ENCODE measurements at regions of chr12 and their contacts with region 1.

Region 1: GRCh38 chr12:98572010-98572409 is 21.5 kb upstream of the SLC25A3 start:
- DNase-seq: no peak
- ATAC-seq: no peak
- H3K4me3 Mint-ChIP-seq: no peak overlapping the region
- H3K27ac Mint-ChIP-seq: no peak overlapping the region
- H3K4me1 Mint-ChIP-seq: no peaks in the 10 kb centered on the region
- H3K27me3 Mint-ChIP-seq: no peaks in the 10 kb centered on the region

Region 2: DNA sequence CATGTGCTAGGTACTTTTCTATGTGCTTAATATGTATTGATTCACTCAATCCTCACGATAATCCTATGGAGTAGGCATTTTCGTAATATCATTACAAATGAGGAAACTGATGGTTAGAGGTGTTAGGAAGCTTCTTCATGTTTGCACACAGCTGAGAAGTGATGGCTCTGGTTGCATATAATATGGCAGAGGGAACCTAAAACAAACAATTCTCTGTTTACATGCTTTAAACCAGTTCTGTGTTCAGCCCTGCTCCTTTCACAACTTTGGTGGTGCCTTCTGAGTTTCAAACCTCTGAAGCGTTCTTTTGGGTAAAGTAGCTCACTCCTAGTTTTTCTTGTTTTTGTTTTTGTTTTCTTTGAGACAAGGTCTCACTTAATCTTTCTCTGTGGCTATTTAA is 21.2 kb before region 1 on chr12:
- CTCF ChIA-PET with region 1: interaction called, 11 read pairs
- POLR2A ChIA-PET with region 1: no interaction called
- DNase-seq: no peak
- ATAC-seq: no peak
- H3K4me3 Mint-ChIP-seq: no peak overlapping the region
- H3K27ac Mint-ChIP-seq: no peak overlapping the region
- H3K4me1 Mint-ChIP-seq: no peaks in the 10 kb centered on the region
- H3K27me3 Mint-ChIP-seq: no peaks in the 10 kb centered on the region

Region 3: DNA sequence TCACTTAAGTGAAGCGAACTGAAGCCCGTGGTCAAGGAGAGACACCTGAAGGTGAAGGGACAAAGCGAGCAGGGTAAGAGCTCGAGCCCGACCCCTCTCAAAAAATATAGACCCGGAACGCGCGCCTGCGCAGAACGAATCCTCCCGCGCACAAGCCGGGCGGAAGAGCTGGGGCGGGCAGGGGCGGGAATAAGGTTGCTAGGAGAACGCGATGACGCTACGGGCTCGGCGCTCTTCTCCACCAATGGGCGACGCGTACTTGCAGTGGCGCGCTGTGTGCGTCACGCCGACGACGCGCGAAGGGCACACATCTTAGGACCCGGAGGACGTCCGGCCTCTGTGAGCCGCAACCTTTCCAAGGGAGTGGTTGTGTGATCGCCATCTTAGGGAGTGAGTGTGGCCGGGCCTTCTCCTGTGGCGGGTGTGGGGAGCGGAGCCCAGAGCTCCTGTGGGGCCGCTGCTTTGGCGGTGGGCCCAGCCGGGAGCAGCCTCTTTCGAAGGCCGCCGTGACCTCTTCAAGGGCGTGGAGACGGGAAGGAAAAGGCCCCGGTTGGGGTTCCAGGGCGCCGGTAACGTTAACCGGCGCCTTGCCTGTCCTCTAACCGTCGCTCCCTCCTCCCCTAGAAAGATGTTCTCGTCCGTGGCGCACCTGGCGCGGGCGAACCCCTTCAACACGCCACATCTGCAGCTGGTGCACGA is 21.5 kb after region 1 on chr12 and contains the start of gene SLC25A3:
- CTCF ChIA-PET with region 1: interaction called, 34 read pairs
- POLR2A ChIA-PET with region 1: no interaction called
- DNase-seq: peak; percentile 96
- ATAC-seq: peak; percentile 96
- H3K4me3 Mint-ChIP-seq: peak within 1 kb of the TSS; percentile 84
- H3K27ac Mint-ChIP-seq: peak within 1 kb of the TSS; percentile 98
- H3K4me1 Mint-ChIP-seq: peaks cover 30% of the 10 kb centered on the region
- H3K27me3 Mint-ChIP-seq: no peaks in the 10 kb centered on the region
- total RNA-seq, gene SLC25A3: 407 to 440 TPM

Region 4: GRCh38 chr12:98653866-98654493 is 82.0 kb after region 1 on chr12:
- CTCF ChIA-PET with region 1: interaction called, 58 read pairs
- POLR2A ChIA-PET with region 1: no interaction called
- DNase-seq: peak; percentile 33
- ATAC-seq: peak; percentile 47
- H3K4me3 Mint-ChIP-seq: no peak overlapping the region
- H3K27ac Mint-ChIP-seq: no peak overlapping the region
- H3K4me1 Mint-ChIP-seq: peaks cover 13% of the 10 kb centered on the region
- H3K27me3 Mint-ChIP-seq: no peaks in the 10 kb centered on the region